Posterior cingulate gyrus (tissue), 11 donors: ENCODE measurements at regions of chr4 and their contacts with region 1.

Region 1: DNA sequence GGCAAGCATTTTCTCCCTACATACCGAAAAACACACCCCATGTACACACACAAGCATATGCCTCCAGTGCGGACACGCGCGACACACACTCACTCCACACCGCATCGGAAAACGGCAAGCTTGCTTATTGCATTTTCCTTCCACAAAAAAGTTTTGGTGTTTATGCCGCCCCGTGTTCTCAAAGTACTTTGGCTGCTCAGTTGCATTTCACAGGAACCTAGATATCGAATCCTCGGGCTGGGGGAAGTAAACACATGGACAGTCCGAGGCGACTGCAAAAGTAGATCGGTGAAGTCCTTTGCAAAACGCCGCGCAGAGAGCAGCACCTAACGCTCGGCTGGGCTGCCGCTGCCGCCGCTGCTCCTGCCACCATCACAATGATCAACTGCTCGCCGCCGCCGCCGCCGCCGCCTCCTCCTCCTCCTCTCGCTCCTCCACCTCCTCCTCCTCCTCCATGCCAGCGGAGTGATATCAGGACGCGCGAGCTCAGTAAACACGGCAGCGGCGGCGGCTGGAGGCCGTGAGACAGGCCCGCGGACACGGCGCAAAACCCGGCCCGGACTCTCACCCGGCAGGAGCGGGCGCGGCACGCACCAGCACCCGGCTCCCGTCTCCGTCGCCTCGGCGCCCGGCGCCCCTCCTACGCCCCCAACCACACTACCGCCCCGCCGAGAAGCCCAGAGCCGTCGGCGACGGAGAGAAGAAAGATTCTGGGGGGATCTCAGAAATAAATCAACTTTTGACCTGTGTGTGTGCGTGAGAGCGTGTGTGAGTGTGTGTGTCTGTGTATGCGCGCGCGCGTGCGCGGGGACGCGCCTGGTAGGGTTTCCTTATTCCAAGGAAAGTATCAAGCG is at the start of gene MAML3:
- DNase-seq: peak; percentile 85 to 98 (median 92)

Region 2: GRCh38 chr4:139734875-139735380 is 419.0 kb before region 1 on chr4:
- intact Hi-C with region 1: loop called (anchors 2 kb)
- DNase-seq: peak; percentile 78 to 98 (median 88)

Region 3: GRCh38 chr4:140012688-140013486 is 141.1 kb before region 1 on chr4:
- intact Hi-C with region 1: loop called (anchors 2 kb)
- DNase-seq: peak in 6 of 10 donors; percentile 15 to 85 (median 51)

Region 4: DNA sequence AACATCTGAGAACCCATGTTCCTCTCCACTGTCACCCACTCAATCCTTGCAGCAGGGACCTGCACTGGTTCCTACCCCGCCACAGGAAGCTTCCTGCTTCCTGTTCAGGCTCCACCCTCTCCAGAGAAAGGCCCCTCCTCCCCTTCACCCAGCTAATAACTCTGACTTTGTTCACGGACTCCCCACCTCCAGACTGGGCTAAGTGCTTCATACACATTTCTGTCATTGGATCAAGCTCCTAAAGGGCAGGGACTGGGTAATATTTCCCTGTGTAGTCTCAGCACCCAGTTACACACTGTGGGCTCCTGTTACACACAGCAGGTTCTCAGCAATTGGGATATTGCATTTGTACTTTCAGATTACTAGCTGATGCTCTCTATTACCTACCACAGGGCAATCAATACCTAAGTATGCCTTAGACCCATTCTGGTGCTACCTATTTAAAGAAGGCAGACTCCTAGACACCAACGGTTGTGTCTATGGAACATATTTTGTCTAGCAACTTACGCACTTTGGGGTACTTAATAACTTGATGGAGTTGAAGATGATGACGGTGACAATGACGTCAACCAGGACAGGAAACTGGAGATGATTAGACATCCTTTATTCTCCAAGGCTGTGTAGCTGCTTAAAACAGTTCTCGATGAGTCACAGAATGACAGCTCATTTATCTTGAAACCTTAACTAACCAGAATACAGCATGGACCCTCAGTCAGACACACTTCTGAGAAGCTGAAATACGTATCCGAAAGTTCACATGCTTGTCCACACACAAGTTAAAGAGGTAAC is 58.1 kb before region 1 on chr4:
- intact Hi-C with region 1: loop called (anchors 5 kb)
- DNase-seq: peak in 1 of 10 donors; percentile 27

Region 5: DNA sequence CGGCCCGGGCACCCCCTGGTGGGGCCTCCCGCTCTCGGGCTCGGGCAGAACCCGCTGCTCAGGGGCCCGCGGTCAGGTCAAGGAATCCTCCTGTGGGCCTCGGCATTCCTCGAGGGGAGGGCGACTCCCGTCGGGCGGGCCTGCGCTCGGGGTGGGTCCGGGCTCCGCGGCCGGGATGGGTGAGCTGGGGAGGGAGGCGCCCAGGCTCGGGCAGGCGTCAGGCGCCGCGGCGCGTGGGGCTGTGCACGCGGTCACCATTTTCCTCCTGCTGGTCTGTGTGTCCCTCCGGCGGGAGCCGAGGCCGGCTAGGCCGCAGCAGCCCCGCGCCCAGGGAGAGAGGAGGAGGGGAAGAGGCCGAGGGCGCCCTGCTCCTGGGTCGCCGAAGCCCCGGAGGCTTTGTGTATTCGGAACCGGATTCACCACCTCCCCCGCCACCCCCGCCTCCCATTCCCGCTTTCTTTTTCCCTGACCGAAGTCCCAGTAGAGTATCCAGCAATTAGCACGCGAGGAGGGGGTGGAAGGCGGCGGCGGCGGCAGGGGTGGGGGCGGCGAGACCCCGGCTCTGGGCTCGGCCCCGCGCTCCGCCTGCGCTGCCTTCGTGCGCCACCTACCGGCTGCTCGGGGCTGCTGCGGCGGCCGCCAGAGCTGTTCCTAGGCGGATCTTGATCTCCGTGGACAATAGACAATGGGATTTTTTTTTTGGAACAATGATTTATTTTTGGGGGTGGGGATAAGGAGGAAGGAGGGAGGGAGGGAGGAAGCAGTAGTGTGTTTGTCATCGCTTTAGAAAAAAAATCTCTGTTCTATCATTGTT is 99.0 kb after region 1 on chr4:
- intact Hi-C with region 1: loop called (anchors 1 kb)
- DNase-seq: peak; percentile 65 to 97 (median 78)